Right ventricle myocardium superior (tissue), 1 donor: ENCODE measurements at regions of chr11 and their contacts with region 1.

Region 1: DNA sequence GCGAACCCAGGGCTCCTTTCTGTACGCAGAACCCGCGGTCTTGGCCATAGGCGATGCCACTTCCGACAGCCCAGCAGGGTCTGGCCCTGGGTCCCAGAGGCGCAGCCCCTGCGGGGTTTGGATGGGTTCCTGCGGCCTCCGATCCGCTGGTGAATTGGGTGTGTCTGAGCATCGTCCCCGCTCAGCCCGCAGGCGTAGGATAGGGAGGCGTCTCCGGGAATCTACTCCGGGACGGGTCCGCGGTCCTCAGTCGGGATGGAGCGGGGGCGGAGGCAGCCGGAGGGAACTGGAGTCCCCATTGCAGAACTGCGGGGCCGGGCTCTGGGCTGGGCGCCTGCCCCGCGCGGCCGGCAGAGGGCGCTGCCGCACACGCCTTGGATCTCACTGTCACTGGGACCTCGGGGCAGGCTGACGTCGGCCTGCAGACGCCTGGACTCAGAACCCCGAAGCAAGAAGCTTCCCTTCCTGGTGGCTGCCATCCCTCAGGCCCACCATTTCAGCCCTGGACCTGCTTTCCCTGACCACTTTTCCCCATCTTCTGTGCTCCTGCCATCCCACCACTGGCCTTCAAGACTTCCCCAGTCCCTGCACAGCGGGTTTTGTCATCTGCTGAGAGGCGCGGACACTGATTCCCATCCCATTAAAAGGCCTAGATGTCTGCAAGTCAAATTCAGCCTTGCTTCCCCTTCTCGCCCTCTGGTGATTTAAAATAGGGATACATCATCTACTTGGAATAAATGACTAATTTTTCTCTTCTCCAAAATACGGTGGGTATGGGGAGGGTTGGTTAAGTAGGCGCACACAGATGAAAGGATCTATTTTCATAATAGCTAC is 38.3 kb upstream of the CREB3L1 start:
- DNase-seq: peak; percentile 92
- ATAC-seq: peak; percentile 88

Region 2: GRCh38 chr11:46121724-46122477 is 117.3 kb before region 1 on chr11:
- intact Hi-C with region 1: loop called (anchors 10 kb)
- DNase-seq: peak; percentile 90
- ATAC-seq: peak; percentile 37

Region 3: GRCh38 chr11:46308631-46309419 is 69.6 kb after region 1 on chr11:
- intact Hi-C with region 1: loop called (anchors 2 kb)
- DNase-seq: peak; percentile 91
- ATAC-seq: peak; percentile 86

Region 4: DNA sequence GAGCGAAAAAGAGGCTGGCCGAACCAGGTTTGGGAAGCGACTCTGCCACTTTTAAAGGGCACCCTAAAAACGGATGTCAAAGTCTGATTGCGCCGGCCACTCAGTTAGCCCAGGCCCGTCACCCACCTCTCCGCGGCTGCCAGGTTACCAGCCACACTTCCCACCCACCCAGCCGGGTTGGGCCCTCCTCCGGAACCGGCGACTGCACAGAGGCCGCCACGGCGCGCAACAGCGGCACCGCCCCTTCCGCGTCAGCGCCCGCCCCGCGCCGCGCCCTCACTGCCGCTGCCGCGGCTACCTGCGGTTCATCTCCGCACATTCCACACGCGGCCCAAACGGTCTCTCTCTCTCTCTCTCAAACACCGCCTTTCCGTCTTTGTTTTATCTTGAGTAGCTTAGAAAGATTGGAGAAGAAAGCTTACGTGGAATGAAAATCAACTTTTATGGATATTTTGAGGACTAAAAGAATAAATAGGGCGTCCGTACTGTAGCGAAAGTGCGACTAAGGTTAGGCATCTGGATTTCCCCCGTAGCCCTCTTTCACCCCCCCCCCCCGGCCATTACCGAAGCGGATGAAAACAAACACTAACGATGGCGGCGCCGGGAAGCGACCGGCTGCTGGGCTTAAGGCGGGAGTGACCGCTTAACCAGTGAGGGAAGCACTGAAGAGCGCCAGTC is 378.0 kb after region 1 on chr11 and contains the starts of genes ATG13 and HARBI1:
- intact Hi-C with region 1: no loop called
- DNase-seq: peak; percentile 94
- ATAC-seq: peak; percentile 99
- total RNA-seq, gene ATG13: 37.4 TPM
- total RNA-seq, gene HARBI1: 1.9 TPM